Right ventricle myocardium inferior (tissue), 1 donor: ENCODE measurements at regions of chrX and their contacts with region 1.

Region 1: GRCh38 chrX:68686097-68686977 is 38.9 kb downstream of the STARD8 start:
- DNase-seq: peak; percentile 74
- ATAC-seq: peak; percentile 74

Region 2: GRCh38 chrX:68532831-68533533 is 153.4 kb before region 1 on chrX:
- intact Hi-C with region 1: loop called (anchors 10 kb)
- DNase-seq: no peak
- ATAC-seq: no peak